GM12878 (cell line): ENCODE measurements at regions of chr19 and their contacts with region 1.

Region 1: DNA sequence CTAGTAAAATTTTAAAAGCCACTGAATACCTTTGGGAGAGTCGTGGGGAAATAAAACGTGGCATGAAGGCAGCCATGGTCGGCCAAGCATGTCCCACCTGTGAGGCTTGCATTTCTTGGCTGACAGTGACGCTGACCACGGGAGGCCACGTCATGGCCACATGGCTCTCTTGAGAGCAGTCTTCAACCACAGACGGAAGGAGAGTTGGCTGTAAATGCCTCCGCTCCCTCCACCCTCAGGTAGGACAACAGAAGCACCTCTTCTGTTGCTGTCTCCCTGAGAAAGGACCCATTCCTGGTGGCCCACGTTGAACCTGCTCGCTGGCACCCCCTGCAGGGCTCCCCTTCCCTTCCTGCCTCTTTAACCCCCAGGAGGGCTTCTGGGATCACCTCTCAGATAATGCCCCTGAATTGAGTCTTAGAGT is 10.6 kb upstream of the LRRC25 start:
- DNase-seq: peak; percentile 87
- ATAC-seq: peak; percentile 95
- H3K4me3 ChIP-seq: no peak overlapping the region
- H3K27ac ChIP-seq: peak overlapping the region; percentile 37
- H3K4me1 ChIP-seq: peaks cover 14% of the 10 kb centered on the region
- H3K27me3 ChIP-seq: no peaks in the 10 kb centered on the region
- CTCF ChIP-seq: peak; percentile 56 to 60 (median 59)
- EP300 ChIP-seq: peak; percentile 73 to 82; a peak in 3 of 4 replicates
- POLR2A ChIP-seq: peak; percentile 68
- RAD21 ChIP-seq: peak; percentile 60

Region 2: DNA sequence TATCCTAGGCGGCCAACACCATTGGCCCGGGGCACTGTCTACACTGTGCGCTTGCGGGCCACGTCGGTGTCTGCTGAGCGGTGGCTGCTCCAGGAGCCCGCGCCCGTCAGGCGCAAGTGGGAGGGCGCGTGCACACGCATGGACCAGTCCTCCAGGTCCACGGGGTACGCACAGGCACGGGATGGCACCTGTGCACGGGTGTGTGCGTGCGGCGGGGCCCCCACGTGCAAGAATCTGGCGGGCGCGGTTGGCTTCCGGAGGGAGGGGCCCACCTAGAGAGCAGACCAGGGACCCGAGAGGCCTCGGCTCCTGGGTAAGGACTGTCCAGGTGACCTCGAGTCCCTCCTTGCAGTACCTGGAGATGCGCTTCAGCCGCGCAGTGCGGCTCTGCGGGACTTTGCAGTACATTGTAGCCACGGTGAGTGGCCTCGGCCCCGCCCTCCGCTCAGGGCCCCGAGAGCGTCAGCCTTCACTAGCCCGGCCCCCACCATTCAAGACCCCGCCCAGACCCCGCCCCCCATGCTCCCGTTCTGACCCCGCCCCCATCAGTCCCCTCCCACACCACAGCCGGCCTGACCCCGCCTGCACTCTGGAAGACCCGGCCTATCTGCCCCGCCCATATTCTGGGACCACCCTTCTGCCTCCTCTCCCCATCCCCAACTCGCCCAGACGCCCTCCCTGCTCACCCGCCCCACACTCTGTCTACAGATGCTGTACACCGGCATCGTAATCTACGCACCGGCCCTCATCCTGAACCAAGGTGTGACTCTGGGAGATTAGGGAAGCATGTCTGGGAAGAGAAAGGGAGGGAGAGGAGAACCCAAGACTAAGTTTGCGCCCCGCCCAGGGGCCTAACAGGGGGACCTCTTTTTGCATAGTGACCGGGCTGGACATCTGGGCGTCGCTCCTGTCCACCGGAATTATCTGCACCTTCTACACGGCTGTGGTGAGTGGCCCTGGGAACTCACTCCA is 534.0 kb before region 1 on chr19:
- CTCF ChIA-PET with region 1: no interaction called
- POLR2A ChIA-PET with region 1: no interaction called
- RAD21 ChIA-PET with region 1: no interaction called
- SMC1A ChIA-PET with region 1: no interaction called
- in situ Hi-C with region 1: no loop called
- intact Hi-C with region 1: no loop called
- DNase-seq: no peak
- ATAC-seq: peak; percentile 90
- H3K4me3 ChIP-seq: peak overlapping the region; percentile 1; the same call in 1 of the 2 replicates
- H3K27ac ChIP-seq: no peak overlapping the region
- H3K4me1 ChIP-seq: peaks cover 3% of the 10 kb centered on the region; the same call in 1 of the 2 replicates
- H3K27me3 ChIP-seq: peaks cover 3 to 4% of the 10 kb centered on the region in 2 experiments; a peak in 3 of 4 replicates
- CTCF ChIP-seq: no peak
- EP300 ChIP-seq: no peak
- POLR2A ChIP-seq: no peak
- RAD21 ChIP-seq: no peak

Region 3: DNA sequence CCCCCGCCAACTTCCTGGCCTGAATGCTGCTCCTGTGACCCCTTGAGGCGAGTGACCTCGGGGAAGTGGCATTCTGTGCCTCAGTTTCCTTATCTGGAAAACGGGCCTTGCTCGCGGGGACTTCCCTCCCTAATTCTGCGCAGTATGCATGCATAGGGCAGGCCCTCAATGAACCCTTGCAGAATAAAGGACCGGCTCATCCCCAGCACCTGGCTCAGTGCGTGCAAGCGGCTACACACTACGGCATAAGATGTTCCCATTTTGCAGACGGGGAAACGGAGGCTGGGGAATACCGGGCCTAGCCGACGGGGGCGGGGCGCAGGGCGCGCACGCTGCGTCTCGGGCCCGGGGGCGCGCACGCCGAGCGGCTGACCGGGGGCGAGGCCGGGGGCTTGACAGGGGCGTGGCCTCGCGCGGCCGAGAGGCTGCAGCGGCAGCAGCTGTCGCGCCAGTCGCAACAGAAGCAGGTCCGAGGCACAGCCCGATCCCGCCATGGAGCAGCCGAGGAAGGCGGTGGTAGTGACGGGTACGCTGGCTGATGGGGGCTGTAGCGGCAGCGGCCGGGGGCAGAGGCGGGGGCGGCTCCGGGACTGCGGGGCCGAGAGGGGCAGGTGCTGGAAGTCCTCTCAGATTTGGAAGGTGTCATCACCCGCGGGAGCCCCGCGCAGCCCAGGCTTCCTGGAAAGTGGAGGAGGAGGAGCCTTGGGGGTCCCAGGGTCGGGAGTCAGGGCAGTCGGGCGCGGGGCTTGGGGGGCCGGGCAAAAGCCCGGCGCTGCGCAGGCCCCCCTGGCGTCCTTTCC is 67.7 kb before region 1 on chr19 and contains the start of gene PGPEP1:
- CTCF ChIA-PET with region 1: interaction called, 35 read pairs
- POLR2A ChIA-PET with region 1: interaction called, 3 read pairs
- RAD21 ChIA-PET with region 1: interaction called, 13 read pairs
- SMC1A ChIA-PET with region 1: interaction called, 6 read pairs
- in situ Hi-C with region 1: loop called (anchors 5 kb)
- intact Hi-C with region 1: loop called (anchors 2 kb)
- DNase-seq: no peak
- ATAC-seq: peak; percentile 86
- H3K4me3 ChIP-seq: peak within 1 kb of the TSS; percentile 79
- H3K27ac ChIP-seq: peak within 1 kb of the TSS; percentile 58
- H3K4me1 ChIP-seq: peaks cover 14% of the 10 kb centered on the region
- H3K27me3 ChIP-seq: no peaks in the 10 kb centered on the region
- CTCF ChIP-seq: no peak
- EP300 ChIP-seq: no peak
- POLR2A ChIP-seq: peak; percentile 70; the same call in 1 of the 2 replicates
- RAD21 ChIP-seq: no peak
- polyA plus RNA-seq, gene PGPEP1: 13.8 to 13.9 TPM

Region 4: DNA sequence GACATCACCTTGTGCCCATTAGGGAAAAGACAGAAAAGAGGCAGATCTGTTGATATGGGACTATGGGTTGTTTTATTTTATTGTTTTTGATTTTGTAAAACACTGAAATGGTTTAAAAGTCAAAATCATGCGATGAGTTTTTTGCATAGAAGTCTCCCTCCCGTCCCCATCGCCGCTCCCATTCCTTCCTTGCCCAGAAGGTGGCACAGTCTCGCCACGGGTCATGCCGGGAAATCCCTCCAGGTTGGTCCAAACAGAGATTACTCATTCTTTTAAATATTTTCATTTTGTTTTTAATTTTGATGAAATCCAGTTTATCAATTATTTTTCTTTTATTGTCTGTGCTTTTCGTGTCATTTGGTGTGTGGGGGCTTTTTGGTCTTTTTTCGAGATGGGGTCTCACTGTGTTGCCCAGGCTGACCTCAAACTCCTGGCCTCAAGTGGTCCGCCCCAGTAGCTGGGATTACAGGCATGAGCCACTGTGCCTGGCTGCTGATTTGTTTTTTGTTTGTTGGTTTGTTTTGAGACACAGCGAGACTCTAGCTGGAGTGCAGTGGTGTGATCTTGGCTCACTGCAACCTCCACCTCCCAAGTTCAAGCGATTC is 58.4 kb before region 1 on chr19:
- CTCF ChIA-PET with region 1: interaction called, 75 read pairs
- POLR2A ChIA-PET with region 1: interaction called, 4 read pairs
- RAD21 ChIA-PET with region 1: interaction called, 15 read pairs
- SMC1A ChIA-PET with region 1: interaction called, 30 read pairs
- in situ Hi-C with region 1: loop called (anchors 5 kb)
- intact Hi-C with region 1: loop called (anchors 1 kb)
- DNase-seq: no peak
- ATAC-seq: peak; percentile 80
- H3K4me3 ChIP-seq: no peak overlapping the region
- H3K27ac ChIP-seq: no peak overlapping the region
- H3K4me1 ChIP-seq: no peaks in the 10 kb centered on the region
- H3K27me3 ChIP-seq: no peaks in the 10 kb centered on the region
- CTCF ChIP-seq: peak; percentile 74 to 93 (median 80)
- EP300 ChIP-seq: no peak
- POLR2A ChIP-seq: no peak
- RAD21 ChIP-seq: peak; percentile 88

Region 5: DNA sequence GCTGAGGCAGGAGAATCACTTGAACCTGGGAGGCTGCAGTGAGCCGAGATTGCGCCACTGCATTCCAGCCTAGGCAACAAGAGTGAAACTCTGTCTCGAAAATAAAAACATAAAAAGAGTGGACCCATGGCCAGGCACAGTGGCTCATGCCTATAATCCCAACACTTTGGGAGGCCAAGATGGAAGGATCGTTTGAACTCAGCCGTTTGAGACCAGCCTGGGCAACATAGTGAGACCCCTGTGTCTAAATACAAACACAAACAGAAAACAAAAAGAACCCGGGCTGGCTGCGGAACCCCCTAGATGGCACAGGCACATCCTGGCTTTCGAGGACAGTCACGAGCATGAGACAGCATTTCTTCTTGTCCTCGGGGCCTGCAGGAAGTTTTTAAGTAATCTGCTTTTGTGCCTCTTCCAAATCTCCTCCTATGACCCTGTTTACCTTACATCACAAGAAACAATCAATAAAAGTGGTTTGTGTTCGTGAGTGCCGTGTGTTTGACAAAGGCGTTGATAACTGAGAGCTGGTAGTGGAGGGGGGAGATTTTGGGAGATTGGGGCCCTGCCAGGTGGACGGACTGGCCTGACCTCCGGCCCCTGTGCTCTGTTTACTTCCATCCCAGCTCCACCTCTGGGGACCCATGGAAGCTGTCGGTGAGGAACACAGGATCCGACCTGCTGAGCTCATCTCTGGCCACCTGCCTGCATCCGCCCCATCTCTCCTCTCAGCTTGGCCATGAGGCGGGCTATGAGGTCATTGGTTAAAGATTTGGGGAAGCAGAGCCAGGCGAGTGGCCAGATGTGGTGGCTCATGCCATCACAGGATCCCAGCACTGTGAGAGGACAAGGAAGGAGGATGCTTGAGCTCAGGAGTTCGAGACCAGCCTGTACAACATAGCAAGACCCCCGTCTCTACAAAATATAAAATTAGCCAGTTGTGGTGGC is 28.0 kb before region 1 on chr19:
- CTCF ChIA-PET with region 1: interaction called, 10 read pairs
- POLR2A ChIA-PET with region 1: no interaction called
- RAD21 ChIA-PET with region 1: interaction called, 4 read pairs
- SMC1A ChIA-PET with region 1: interaction called, 3 read pairs
- in situ Hi-C with region 1: no loop called
- intact Hi-C with region 1: no loop called
- DNase-seq: no peak
- ATAC-seq: no peak
- H3K4me3 ChIP-seq: no peak overlapping the region
- H3K27ac ChIP-seq: no peak overlapping the region
- H3K4me1 ChIP-seq: peaks cover 22% of the 10 kb centered on the region
- H3K27me3 ChIP-seq: no peaks in the 10 kb centered on the region
- CTCF ChIP-seq: no peak
- EP300 ChIP-seq: no peak
- POLR2A ChIP-seq: no peak
- RAD21 ChIP-seq: no peak

Region 6: DNA sequence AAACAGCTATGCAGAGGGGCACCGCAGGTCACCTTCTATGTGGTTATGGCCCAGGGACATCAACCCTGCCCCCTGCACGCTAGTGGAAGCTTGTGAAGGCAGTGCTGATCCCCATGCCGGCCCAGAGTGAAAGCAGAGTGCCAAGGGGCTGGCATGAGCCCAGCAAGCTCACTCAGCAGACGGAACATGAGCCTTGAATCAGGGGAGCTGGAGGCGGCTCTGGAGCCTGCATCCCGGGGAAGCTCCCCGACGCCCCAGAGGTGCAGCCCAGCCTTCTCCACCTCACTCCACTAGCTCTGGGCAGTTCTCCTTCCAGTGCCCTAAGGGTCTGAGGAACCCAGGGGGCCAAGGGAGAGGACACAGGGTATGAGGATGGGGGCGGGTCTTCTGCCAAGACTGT is 48.9 kb after region 1 on chr19:
- CTCF ChIA-PET with region 1: no interaction called
- POLR2A ChIA-PET with region 1: no interaction called
- RAD21 ChIA-PET with region 1: no interaction called
- SMC1A ChIA-PET with region 1: no interaction called
- in situ Hi-C with region 1: no loop called
- intact Hi-C with region 1: no loop called
- DNase-seq: no peak
- ATAC-seq: no peak
- H3K4me3 ChIP-seq: no peak overlapping the region
- H3K27ac ChIP-seq: no peak overlapping the region
- H3K4me1 ChIP-seq: no peaks in the 10 kb centered on the region
- H3K27me3 ChIP-seq: no peaks in the 10 kb centered on the region
- CTCF ChIP-seq: no peak
- EP300 ChIP-seq: no peak
- POLR2A ChIP-seq: no peak
- RAD21 ChIP-seq: no peak